B cell (primary cell): ENCODE measurements at regions of chr3 and their contacts with region 1.

Region 1: GRCh38 chr3:176872771-176873209 is 324.5 kb downstream of the TBL1XR1 start:
- DNase-seq: peak; percentile 62
- ATAC-seq: peak; percentile 54
- H3K4me3 ChIP-seq: no peak overlapping the region
- H3K4me3 Mint-ChIP-seq: no peak overlapping the region
- H3K27ac ChIP-seq: no peak overlapping the region
- H3K27ac Mint-ChIP-seq: no peak overlapping the region
- H3K4me1 ChIP-seq: peaks cover 0 to 3% of the 10 kb centered on the region in 2 donors
- H3K4me1 Mint-ChIP-seq: peaks cover 1% of the 10 kb centered on the region
- H3K27me3 ChIP-seq: peaks cover 0 to 2% (median 0%) of the 10 kb centered on the region in 4 experiments
- H3K27me3 Mint-ChIP-seq: peaks cover 3% of the 10 kb centered on the region
- CTCF ChIP-seq: peak; percentile 81

Region 2: GRCh38 chr3:176939022-176939817 is 66.4 kb after region 1 on chr3:
- CTCF ChIA-PET with region 1: interaction called, 11 read pairs
- POLR2A ChIA-PET with region 1: no interaction called
- intact Hi-C with region 1: loop called (anchors 1 kb)
- DNase-seq: peak; percentile 45
- ATAC-seq: peak; percentile 58
- H3K4me3 ChIP-seq: no peak overlapping the region
- H3K4me3 Mint-ChIP-seq: no peak overlapping the region
- H3K27ac ChIP-seq: no peak overlapping the region
- H3K27ac Mint-ChIP-seq: no peak overlapping the region
- H3K4me1 ChIP-seq: no peaks in the 10 kb centered on the region
- H3K4me1 Mint-ChIP-seq: no peaks in the 10 kb centered on the region
- H3K27me3 ChIP-seq: peaks cover 0 to 2% (median 0%) of the 10 kb centered on the region in 4 experiments
- H3K27me3 Mint-ChIP-seq: peaks cover 15% of the 10 kb centered on the region
- CTCF ChIP-seq: peak; percentile 87

Region 3: GRCh38 chr3:176953106-176954060 is 80.6 kb after region 1 on chr3:
- CTCF ChIA-PET with region 1: no interaction called
- POLR2A ChIA-PET with region 1: no interaction called
- intact Hi-C with region 1: no loop called
- DNase-seq: no peak
- ATAC-seq: no peak
- H3K4me3 ChIP-seq: no peak overlapping the region
- H3K4me3 Mint-ChIP-seq: no peak overlapping the region
- H3K27ac ChIP-seq: no peak overlapping the region
- H3K27ac Mint-ChIP-seq: no peak overlapping the region
- H3K4me1 ChIP-seq: no peaks in the 10 kb centered on the region
- H3K4me1 Mint-ChIP-seq: no peaks in the 10 kb centered on the region
- H3K27me3 ChIP-seq: peaks cover 0 to 3% (median 0%) of the 10 kb centered on the region in 4 experiments
- H3K27me3 Mint-ChIP-seq: no peaks in the 10 kb centered on the region
- CTCF ChIP-seq: no peak

Region 4: DNA sequence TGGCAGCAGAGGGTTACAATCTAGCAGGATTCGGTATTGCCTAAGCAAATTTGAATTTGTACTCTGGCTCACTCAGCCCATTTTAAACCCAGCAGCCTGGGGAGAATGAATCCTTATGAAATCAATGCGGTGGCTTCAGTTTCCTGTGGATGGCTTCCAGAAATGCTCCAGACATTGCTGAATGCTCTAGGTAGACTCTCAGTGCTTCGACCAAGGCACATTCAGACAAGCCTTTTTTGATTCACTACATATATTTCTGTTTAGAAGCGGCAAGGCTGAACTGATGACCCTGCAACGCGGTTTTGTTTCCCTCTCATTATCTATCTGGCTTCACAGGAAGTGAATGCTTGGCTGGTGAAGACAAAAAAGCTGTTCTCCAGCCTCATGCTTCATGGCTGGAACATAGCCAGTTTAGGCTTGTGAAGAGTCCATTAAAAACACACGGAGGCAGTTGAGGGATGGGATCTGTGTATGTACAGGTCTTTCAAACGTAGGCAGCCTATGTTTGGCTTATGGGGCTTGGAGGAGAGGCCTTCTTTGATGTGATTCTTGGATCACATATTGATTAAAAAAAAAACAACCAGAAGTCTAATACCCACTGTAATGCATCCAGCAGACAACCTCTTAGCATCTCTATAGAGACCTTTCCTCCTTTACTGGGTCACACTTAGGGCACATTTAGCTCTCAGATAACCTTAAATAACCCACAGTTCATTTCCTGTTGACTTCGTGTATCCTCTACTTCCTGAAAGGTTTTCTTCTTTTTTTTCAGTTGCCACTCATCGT is 724.7 kb after region 1 on chr3:
- CTCF ChIA-PET with region 1: no interaction called
- POLR2A ChIA-PET with region 1: no interaction called
- intact Hi-C with region 1: no loop called
- DNase-seq: peak; percentile 47
- ATAC-seq: peak; percentile 78
- H3K4me3 ChIP-seq: peak overlapping the region in 1 of 5 experiments; percentile 51
- H3K4me3 Mint-ChIP-seq: peak overlapping the region; percentile 73
- H3K27ac ChIP-seq: peak overlapping the region; percentile 70 to 71
- H3K27ac Mint-ChIP-seq: peak overlapping the region; percentile 79
- H3K4me1 ChIP-seq: peaks cover 43 to 52% of the 10 kb centered on the region in 2 donors
- H3K4me1 Mint-ChIP-seq: peaks cover 53% of the 10 kb centered on the region
- H3K27me3 ChIP-seq: no peaks in the 10 kb centered on the region
- H3K27me3 Mint-ChIP-seq: no peaks in the 10 kb centered on the region
- CTCF ChIP-seq: no peak

Region 5: GRCh38 chr3:177777699-177778098 is 904.9 kb after region 1 on chr3:
- CTCF ChIA-PET with region 1: interaction called, 19 read pairs
- POLR2A ChIA-PET with region 1: no interaction called
- intact Hi-C with region 1: loop called (anchors 1 kb)
- DNase-seq: peak; percentile 58
- ATAC-seq: peak; percentile 47
- H3K4me3 ChIP-seq: no peak overlapping the region
- H3K4me3 Mint-ChIP-seq: no peak overlapping the region
- H3K27ac ChIP-seq: no peak overlapping the region
- H3K27ac Mint-ChIP-seq: no peak overlapping the region
- H3K4me1 ChIP-seq: peaks cover 14 to 19% of the 10 kb centered on the region in 2 donors
- H3K4me1 Mint-ChIP-seq: peaks cover 18% of the 10 kb centered on the region
- H3K27me3 ChIP-seq: no peaks in the 10 kb centered on the region
- H3K27me3 Mint-ChIP-seq: no peaks in the 10 kb centered on the region
- CTCF ChIP-seq: peak; percentile 56

Region 6: GRCh38 chr3:178325330-178325729 is 1452.5 kb after region 1 on chr3:
- CTCF ChIA-PET with region 1: no interaction called
- POLR2A ChIA-PET with region 1: no interaction called
- intact Hi-C with region 1: loop called (anchors 5 kb)
- DNase-seq: no peak
- ATAC-seq: no peak
- H3K4me3 ChIP-seq: no peak overlapping the region
- H3K4me3 Mint-ChIP-seq: no peak overlapping the region
- H3K27ac ChIP-seq: no peak overlapping the region
- H3K27ac Mint-ChIP-seq: no peak overlapping the region
- H3K4me1 ChIP-seq: no peaks in the 10 kb centered on the region
- H3K4me1 Mint-ChIP-seq: no peaks in the 10 kb centered on the region
- H3K27me3 ChIP-seq: no peaks in the 10 kb centered on the region
- H3K27me3 Mint-ChIP-seq: no peaks in the 10 kb centered on the region
- CTCF ChIP-seq: no peak

Region 7: DNA sequence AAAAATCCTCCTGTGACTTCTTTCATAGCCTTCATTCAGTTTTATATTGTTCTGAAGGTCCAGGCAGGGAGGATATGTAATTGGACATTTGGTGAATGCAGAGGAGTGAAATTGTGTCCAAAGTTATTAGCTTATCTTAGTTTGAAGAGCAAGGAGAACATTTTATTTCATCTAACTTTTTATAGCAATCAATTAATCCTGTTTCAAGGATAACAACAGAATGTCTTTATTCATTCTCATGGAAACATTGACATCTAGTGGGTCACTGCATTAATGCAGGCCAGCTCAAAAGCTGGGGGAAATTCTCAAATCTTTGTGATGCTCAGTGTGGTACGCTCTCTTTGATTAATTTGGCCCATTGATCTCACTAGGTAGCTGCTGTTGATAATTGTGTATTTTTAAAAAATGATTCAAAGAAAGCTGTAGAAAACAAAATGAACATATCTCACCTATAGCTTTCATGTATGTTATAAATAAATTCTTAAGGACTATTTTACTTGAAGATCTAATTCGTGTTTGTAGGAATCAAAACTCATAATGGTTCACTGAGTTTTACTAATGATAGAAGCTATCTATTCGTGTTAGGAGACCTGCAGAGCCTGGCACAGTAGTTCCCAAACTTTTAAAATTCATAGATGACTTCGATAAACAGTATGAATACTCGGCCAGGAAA is 1512.6 kb after region 1 on chr3:
- CTCF ChIA-PET with region 1: interaction called, 40 read pairs
- POLR2A ChIA-PET with region 1: no interaction called
- intact Hi-C with region 1: no loop called
- DNase-seq: peak; percentile 34
- ATAC-seq: no peak
- H3K4me3 ChIP-seq: no peak overlapping the region
- H3K4me3 Mint-ChIP-seq: no peak overlapping the region
- H3K27ac ChIP-seq: no peak overlapping the region
- H3K27ac Mint-ChIP-seq: no peak overlapping the region
- H3K4me1 ChIP-seq: no peaks in the 10 kb centered on the region
- H3K4me1 Mint-ChIP-seq: no peaks in the 10 kb centered on the region
- H3K27me3 ChIP-seq: no peaks in the 10 kb centered on the region
- H3K27me3 Mint-ChIP-seq: no peaks in the 10 kb centered on the region
- CTCF ChIP-seq: peak; percentile 74

Region 8: DNA sequence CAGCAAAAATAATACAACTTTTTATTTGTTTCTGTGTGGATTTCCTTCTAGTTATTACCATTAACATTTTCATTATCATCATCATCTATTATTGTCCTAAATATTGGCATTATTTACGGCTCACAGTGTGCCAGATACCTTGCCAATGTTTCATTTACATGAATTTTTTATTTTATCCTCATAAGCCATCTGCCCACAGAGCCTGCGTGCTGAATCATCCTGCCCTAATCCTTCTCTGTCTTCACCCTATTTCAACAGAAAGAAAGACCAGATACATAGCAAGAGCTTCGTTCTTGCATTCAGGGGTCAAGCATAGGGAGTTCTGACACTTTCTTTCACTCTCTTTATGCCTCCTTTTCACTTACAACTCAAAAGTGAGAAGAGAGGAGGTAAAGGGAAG is 1745.4 kb after region 1 on chr3:
- CTCF ChIA-PET with region 1: no interaction called
- POLR2A ChIA-PET with region 1: no interaction called
- intact Hi-C with region 1: no loop called
- DNase-seq: no peak
- ATAC-seq: no peak
- H3K4me3 ChIP-seq: no peak overlapping the region
- H3K4me3 Mint-ChIP-seq: no peak overlapping the region
- H3K27ac ChIP-seq: no peak overlapping the region
- H3K27ac Mint-ChIP-seq: no peak overlapping the region
- H3K4me1 ChIP-seq: no peaks in the 10 kb centered on the region
- H3K4me1 Mint-ChIP-seq: no peaks in the 10 kb centered on the region
- H3K27me3 ChIP-seq: no peaks in the 10 kb centered on the region
- H3K27me3 Mint-ChIP-seq: no peaks in the 10 kb centered on the region
- CTCF ChIP-seq: no peak